Transverse colon (tissue), 4 donors: ENCODE measurements at regions of chr12 and their contacts with region 1.

Region 1: DNA sequence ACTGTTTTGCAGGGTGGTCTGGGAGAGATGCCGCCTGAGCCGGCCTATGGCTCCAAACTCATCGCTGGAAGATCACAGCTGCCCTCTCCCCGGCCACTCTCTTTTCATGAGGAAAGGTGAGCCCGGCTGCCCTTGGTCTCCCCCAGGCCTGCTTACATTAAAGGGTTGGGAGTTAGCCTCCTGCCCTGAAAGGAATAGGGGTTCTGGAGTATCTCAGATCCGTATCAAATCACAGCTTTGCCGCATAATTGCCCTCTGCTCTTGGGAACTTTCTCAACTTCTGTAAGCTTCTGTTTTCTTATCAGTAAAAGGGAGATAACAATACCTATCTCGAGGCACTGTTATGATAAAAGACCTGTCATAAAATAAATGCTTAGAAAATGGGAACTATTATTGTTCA is 17.6 kb downstream of the PHLDA1 start:
- DNase-seq: no peak
- H3K4me3 ChIP-seq: no peak overlapping the region
- H3K27ac ChIP-seq: no peak overlapping the region
- H3K4me1 ChIP-seq: peaks cover 0 to 6% (median 1%) of the 10 kb centered on the region in 4 donors
- H3K27me3 ChIP-seq: peaks cover 3% of the 10 kb centered on the region
- CTCF ChIP-seq: no peak
- EP300 ChIP-seq: no peak
- POLR2A ChIP-seq: no peak

Region 2: DNA sequence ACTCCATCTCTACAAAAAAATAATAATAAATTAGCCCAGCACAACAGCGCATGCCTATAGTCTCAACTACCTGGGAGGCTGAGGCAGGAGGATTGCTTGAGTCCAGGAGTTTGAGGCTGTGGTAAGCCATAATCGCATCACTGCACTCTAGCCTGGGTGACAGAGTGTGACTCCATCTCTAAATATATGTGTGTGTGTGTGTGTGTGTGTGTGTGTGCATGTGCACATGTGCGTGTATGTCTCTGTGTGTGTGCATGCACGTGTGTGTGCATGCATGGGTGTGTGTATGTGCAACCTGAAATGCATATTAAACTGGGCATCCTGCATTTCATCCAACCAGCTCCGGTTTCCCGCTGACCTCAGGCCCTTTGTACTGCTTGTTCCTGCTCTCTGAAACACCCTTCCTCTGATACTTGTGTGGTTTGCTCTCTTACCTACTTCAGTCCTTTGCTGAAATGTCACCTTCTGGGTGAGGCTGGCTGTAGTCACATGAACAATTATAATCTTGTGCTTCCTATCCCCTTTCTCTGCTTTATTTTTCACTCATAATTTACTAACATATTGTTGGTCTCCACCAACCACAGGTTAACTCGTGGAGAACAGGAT is 29.3 kb before region 1 on chr12:
- in situ Hi-C with region 1: no loop called
- intact Hi-C with region 1: loop called (anchors 2 kb)
- DNase-seq: no peak
- H3K4me3 ChIP-seq: no peak overlapping the region
- H3K27ac ChIP-seq: no peak overlapping the region
- H3K4me1 ChIP-seq: peaks cover 0 to 25% (median 0%) of the 10 kb centered on the region in 4 donors
- H3K27me3 ChIP-seq: no peaks in the 10 kb centered on the region
- CTCF ChIP-seq: no peak
- EP300 ChIP-seq: no peak
- POLR2A ChIP-seq: no peak

Region 3: GRCh38 chr12:76226397-76226796 is 212.4 kb after region 1 on chr12:
- in situ Hi-C with region 1: no loop called
- intact Hi-C with region 1: no loop called
- DNase-seq: no peak
- H3K4me3 ChIP-seq: no peak overlapping the region
- H3K27ac ChIP-seq: no peak overlapping the region
- H3K4me1 ChIP-seq: no peaks in the 10 kb centered on the region
- H3K27me3 ChIP-seq: no peaks in the 10 kb centered on the region
- CTCF ChIP-seq: no peak
- EP300 ChIP-seq: no peak
- POLR2A ChIP-seq: no peak